IMR-90 (cell line): ENCODE measurements at regions of chr18 and their contacts with region 1.

Region 1: GRCh38 chr18:37684590-37684989 is 119.0 kb upstream of the CELF4 start:
- DNase-seq: no peak
- ATAC-seq: no peak
- H3K4me3 ChIP-seq: no peak overlapping the region
- H3K27ac ChIP-seq: no peak overlapping the region
- H3K4me1 ChIP-seq: no peaks in the 10 kb centered on the region
- H3K27me3 ChIP-seq: no peaks in the 10 kb centered on the region
- CTCF ChIP-seq: no peak
- POLR2A ChIP-seq: no peak
- RAD21 ChIP-seq: no peak

Region 2: DNA sequence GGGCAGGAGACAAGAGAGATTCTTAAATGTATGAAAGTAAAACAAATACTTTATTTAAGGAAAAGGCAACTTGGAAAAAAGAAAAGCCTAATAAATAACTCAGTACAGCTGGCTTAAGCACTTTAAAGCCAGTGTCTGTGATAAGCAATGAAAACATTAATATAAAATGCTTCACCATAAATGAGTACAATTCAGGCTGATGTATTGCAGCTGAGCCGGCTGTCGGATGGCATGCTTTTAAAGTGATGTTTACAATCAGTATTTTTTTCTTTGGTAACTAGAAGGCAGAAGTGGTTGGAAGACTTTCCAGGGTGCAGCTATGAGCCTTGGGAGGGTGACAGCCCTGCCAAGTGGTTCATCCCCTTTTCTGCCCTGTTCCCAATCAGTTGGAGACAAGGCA is 60.3 kb before region 1 on chr18:
- CTCF ChIA-PET with region 1: no interaction called
- POLR2A ChIA-PET with region 1: interaction called, 6 read pairs
- dilution Hi-C with region 1: no loop called
- in situ Hi-C with region 1: loop called (anchors 10 kb)
- intact Hi-C with region 1: no loop called
- DNase-seq: no peak
- ATAC-seq: no peak
- H3K4me3 ChIP-seq: no peak overlapping the region
- H3K27ac ChIP-seq: no peak overlapping the region
- H3K4me1 ChIP-seq: no peaks in the 10 kb centered on the region
- H3K27me3 ChIP-seq: no peaks in the 10 kb centered on the region
- CTCF ChIP-seq: no peak
- POLR2A ChIP-seq: no peak
- RAD21 ChIP-seq: no peak